GM12878 (cell line): ENCODE measurements at regions of chr7 and their contacts with region 1.

Region 1: GRCh38 chr7:100101016-100101862 is at the starts of genes AP4M1 and MCM7:
- DNase-seq: peak; percentile 92
- ATAC-seq: peak; percentile 94
- H3K4me3 ChIP-seq: peak within 1 kb of the TSS; percentile 88
- H3K27ac ChIP-seq: peak within 1 kb of the TSS; percentile 97
- H3K4me1 ChIP-seq: peaks cover 16% of the 10 kb centered on the region
- H3K27me3 ChIP-seq: no peaks in the 10 kb centered on the region
- CTCF ChIP-seq: no peak
- EP300 ChIP-seq: no peak
- POLR2A ChIP-seq: peak; percentile 82
- RAD21 ChIP-seq: no peak
- polyA plus RNA-seq, gene AP4M1: 0.77 to 2.1 TPM
- polyA plus RNA-seq, gene MCM7: 227 to 234 TPM

Region 2: GRCh38 chr7:100081535-100082102 is 19.6 kb before region 1 on chr7 and contains the start of gene ZNF3:
- CTCF ChIA-PET with region 1: interaction called, 6 read pairs
- POLR2A ChIA-PET with region 1: interaction called, 15 read pairs
- RAD21 ChIA-PET with region 1: interaction called, 23 read pairs
- SMC1A ChIA-PET with region 1: interaction called, 11 read pairs
- in situ Hi-C with region 1: no loop called
- intact Hi-C with region 1: loop called (anchors 1 kb)
- DNase-seq: peak; percentile 97
- ATAC-seq: peak; percentile 90
- H3K4me3 ChIP-seq: peak within 1 kb of the TSS; percentile 88
- H3K27ac ChIP-seq: peak within 1 kb of the TSS; percentile 89
- H3K4me1 ChIP-seq: peaks cover 4% of the 10 kb centered on the region
- H3K27me3 ChIP-seq: no peaks in the 10 kb centered on the region
- CTCF ChIP-seq: peak; percentile 84 to 97 (median 89); a peak in 5 of 6 replicates
- EP300 ChIP-seq: peak in 1 of 2 experiments; percentile 60; a peak in 1 of 4 replicates
- POLR2A ChIP-seq: peak; percentile 96
- RAD21 ChIP-seq: peak; percentile 66
- polyA plus RNA-seq, gene ZNF3: 17.2 to 19.0 TPM

Region 3: DNA sequence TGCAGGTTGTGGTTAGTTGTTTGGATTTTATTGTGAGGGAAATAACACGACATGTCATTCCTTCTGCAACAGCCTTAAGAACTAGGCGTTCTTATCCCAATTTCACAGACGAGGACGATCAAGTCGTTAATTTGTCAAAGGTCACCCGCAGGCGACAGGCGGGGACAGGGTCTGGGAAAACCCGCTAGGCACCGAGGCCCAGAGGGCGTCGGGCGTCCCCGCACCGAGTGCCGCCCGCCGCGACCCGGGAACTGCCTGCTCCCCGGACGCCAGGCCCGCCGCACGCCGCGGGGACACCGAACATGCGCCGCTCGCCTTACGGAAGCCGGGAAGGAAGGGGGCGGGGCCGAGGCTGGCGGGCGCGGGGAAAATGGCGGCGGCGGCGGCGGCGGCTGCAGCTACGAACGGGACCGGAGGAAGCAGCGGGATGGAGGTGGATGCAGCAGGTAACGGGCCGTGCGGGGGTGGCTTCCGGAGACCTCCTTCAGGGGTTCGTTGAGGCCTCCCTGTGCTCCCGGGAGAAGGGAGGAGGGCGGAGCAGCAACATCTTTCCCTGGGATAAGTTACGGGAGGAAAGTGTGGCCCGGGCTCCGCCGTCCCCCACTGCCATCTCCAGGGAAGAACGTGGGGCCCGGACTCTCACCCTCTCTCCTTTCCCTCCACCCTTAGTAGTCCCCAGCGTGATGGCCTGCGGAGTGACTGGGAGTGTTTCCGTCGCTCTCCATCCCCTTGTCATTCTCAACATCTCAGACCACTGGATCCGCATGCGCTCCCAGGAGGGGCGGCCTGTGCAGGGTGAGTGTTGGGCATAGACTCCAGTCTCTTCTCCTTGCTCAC is 12.4 kb before region 1 on chr7 and contains the start of gene COPS6:
- CTCF ChIA-PET with region 1: interaction called, 3 read pairs
- POLR2A ChIA-PET with region 1: interaction called, 39 read pairs
- RAD21 ChIA-PET with region 1: interaction called, 7 read pairs
- SMC1A ChIA-PET with region 1: interaction called, 4 read pairs
- in situ Hi-C with region 1: no loop called
- intact Hi-C with region 1: no loop called
- DNase-seq: no peak
- ATAC-seq: peak; percentile 77
- H3K4me3 ChIP-seq: peak within 1 kb of the TSS; percentile 92
- H3K27ac ChIP-seq: peak within 1 kb of the TSS; percentile 84
- H3K4me1 ChIP-seq: peaks cover 6% of the 10 kb centered on the region
- H3K27me3 ChIP-seq: no peaks in the 10 kb centered on the region
- CTCF ChIP-seq: no peak
- EP300 ChIP-seq: no peak
- POLR2A ChIP-seq: peak; percentile 96
- RAD21 ChIP-seq: no peak
- polyA plus RNA-seq, gene COPS6: 64.1 to 108 TPM